ENCODE measurements at regions of chr9 and their contacts with region 1.

Region 1: GRCh38 chr9:131334629-131335367 is 45.3 kb downstream of the PLPP7 start:
- DNase-seq: no peak
- H3K4me3 Mint-ChIP-seq: no peak overlapping the region
- H3K27ac Mint-ChIP-seq: no peak overlapping the region
- H3K4me1 Mint-ChIP-seq: peaks cover 3% of the 10 kb centered on the region
- H3K27me3 Mint-ChIP-seq: peaks cover 2% of the 10 kb centered on the region

Region 2: GRCh38 chr9:131056781-131057506 is 277.9 kb before region 1 on chr9:
- CTCF ChIA-PET with region 1: interaction called, 27 read pairs
- POLR2A ChIA-PET with region 1: no interaction called
- DNase-seq: no peak
- H3K4me3 Mint-ChIP-seq: no peak overlapping the region
- H3K27ac Mint-ChIP-seq: no peak overlapping the region
- H3K4me1 Mint-ChIP-seq: no peaks in the 10 kb centered on the region
- H3K27me3 Mint-ChIP-seq: no peaks in the 10 kb centered on the region

Region 3: GRCh38 chr9:131178382-131178781 is 156.4 kb before region 1 on chr9:
- CTCF ChIA-PET with region 1: interaction called, 126 read pairs
- POLR2A ChIA-PET with region 1: interaction called, 5 read pairs
- DNase-seq: peak; percentile 82
- H3K4me3 Mint-ChIP-seq: no peak overlapping the region
- H3K27ac Mint-ChIP-seq: no peak overlapping the region
- H3K4me1 Mint-ChIP-seq: peaks cover 5% of the 10 kb centered on the region
- H3K27me3 Mint-ChIP-seq: no peaks in the 10 kb centered on the region

Region 4: DNA sequence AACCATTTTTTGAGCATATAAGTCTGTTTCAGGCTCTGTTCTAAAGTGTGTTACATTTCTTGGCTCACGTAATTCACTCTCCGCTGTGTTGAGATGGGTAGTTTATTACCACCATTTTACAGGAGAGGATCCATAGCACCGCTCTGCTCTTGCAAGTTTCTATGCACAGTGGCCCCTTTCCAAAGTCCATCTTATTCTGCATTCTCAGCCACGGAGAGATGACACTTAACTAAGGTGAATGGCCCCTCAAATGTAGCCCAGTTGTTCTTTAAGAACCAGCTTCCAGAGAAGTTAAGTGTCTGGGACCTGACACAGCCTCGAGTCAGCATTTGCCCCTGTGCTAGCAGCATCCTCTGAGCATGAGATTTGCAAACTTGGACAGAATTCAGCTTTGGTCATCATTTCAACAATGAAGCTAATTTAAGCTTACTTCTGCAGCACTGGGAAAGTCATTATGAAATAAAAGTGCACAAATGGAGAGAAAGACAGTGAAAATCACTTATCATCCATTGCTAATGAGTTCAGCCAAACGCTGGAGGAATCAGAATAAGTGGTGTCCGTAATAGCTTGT is 120.4 kb before region 1 on chr9:
- CTCF ChIA-PET with region 1: interaction called, 17 read pairs
- POLR2A ChIA-PET with region 1: no interaction called
- DNase-seq: no peak
- H3K4me3 Mint-ChIP-seq: no peak overlapping the region
- H3K27ac Mint-ChIP-seq: no peak overlapping the region
- H3K4me1 Mint-ChIP-seq: no peaks in the 10 kb centered on the region
- H3K27me3 Mint-ChIP-seq: no peaks in the 10 kb centered on the region